Natural killer cell (primary cell): ENCODE measurements at regions of chr12 and their contacts with region 1.

Region 1: DNA sequence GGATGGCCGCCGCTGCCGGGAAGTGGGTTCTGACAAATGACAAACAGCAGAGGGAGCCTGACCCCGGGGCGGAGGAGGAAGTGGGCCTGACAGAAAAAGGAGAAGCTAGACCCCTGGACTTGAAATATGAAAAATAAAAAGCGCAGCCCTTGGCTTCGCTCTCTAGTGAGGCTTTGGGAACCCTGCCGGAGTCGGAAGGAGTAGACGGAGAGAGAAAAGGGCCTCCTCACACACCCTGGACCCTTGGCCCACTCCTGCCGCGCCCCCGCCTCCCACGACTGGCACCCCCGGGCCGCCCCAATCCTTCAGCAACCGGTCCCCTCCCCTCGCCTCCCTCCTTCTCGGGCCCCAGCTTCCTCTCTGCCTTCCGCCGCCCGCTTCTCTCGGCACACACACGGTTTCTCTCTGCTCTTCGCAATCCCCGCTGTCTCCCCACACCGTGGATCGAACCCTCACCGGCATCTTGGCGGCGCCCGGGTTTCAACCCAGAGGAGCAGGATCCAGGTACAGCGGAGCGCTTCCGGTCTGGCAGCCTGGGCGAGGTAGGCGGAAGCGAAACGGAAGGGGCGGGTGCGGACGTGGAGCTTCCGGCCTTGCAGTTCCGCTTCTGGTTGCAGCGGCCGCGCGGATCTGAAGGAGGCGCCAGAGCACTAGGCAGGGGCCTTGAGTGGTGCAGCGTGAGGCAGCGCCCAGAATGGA is at the start of gene ARPC3:
- DNase-seq: peak; percentile 92 to 98
- ATAC-seq: peak; percentile 95 to 98 (median 96)
- H3K4me3 ChIP-seq: peak within 1 kb of the TSS; percentile 97
- H3K4me3 Mint-ChIP-seq: peak within 1 kb of the TSS; percentile 100
- H3K27ac ChIP-seq: peak within 1 kb of the TSS; percentile 97
- H3K27ac Mint-ChIP-seq: peak within 1 kb of the TSS; percentile 99
- H3K4me1 ChIP-seq: peaks cover 29% of the 10 kb centered on the region
- H3K4me1 Mint-ChIP-seq: peaks cover 38 to 39% of the 10 kb centered on the region in 2 donors
- H3K27me3 ChIP-seq: no peaks in the 10 kb centered on the region
- H3K27me3 Mint-ChIP-seq: no peaks in the 10 kb centered on the region
- CTCF ChIP-seq: peak; percentile 77
- total RNA-seq, gene ARPC3: 298 to 344 (median 311) TPM

Region 2: DNA sequence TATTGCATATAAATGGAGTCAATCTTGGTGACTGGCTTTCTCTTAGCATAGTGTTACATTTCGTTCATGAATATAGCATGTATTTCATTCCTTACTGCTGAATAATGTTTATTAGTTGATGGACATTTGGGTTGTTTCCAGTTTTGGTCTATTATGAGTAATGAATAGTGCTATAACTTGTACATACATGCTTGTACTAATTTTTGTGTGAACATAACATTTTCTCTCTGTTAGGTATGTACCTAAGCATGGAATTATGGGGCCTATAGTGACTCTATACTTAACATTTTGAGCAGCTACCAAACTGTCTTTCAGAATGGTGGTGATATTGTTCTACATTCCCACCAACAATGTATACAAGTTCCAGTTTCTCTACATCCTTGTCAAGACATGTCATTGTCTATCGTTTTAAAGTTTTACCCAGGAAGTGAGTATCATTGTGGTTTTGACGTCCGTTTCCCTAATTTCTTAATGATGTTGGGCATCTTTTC is 145.8 kb before region 1 on chr12:
- intact Hi-C with region 1: no loop called
- DNase-seq: no peak
- ATAC-seq: no peak
- H3K4me3 ChIP-seq: no peak overlapping the region
- H3K4me3 Mint-ChIP-seq: no peak overlapping the region
- H3K27ac ChIP-seq: no peak overlapping the region
- H3K27ac Mint-ChIP-seq: peak overlapping the region; percentile 34 to 78
- H3K4me1 ChIP-seq: peaks cover 4% of the 10 kb centered on the region
- H3K4me1 Mint-ChIP-seq: peaks cover 61 to 62% of the 10 kb centered on the region in 2 donors
- H3K27me3 ChIP-seq: no peaks in the 10 kb centered on the region
- H3K27me3 Mint-ChIP-seq: no peaks in the 10 kb centered on the region
- CTCF ChIP-seq: no peak

Region 3: GRCh38 chr12:110468212-110469048 is 18.5 kb after region 1 on chr12 and contains the starts of genes FAM216A and GPN3:
- intact Hi-C with region 1: loop called (anchors 1 kb)
- DNase-seq: peak; percentile 91 to 97
- ATAC-seq: peak; percentile 87 to 94 (median 89)
- H3K4me3 ChIP-seq: peak within 1 kb of the TSS; percentile 92
- H3K4me3 Mint-ChIP-seq: peak within 1 kb of the TSS; percentile 98
- H3K27ac ChIP-seq: peak within 1 kb of the TSS; percentile 81
- H3K27ac Mint-ChIP-seq: peak within 1 kb of the TSS; percentile 89 to 90
- H3K4me1 ChIP-seq: peaks cover 21% of the 10 kb centered on the region
- H3K4me1 Mint-ChIP-seq: peaks cover 23 to 29% of the 10 kb centered on the region in 2 donors
- H3K27me3 ChIP-seq: no peaks in the 10 kb centered on the region
- H3K27me3 Mint-ChIP-seq: no peaks in the 10 kb centered on the region
- CTCF ChIP-seq: no peak
- total RNA-seq, gene FAM216A: 3.1 to 4.7 (median 3.8) TPM
- total RNA-seq, gene GPN3: 4.7 to 10.4 (median 6.1) TPM

Region 4: DNA sequence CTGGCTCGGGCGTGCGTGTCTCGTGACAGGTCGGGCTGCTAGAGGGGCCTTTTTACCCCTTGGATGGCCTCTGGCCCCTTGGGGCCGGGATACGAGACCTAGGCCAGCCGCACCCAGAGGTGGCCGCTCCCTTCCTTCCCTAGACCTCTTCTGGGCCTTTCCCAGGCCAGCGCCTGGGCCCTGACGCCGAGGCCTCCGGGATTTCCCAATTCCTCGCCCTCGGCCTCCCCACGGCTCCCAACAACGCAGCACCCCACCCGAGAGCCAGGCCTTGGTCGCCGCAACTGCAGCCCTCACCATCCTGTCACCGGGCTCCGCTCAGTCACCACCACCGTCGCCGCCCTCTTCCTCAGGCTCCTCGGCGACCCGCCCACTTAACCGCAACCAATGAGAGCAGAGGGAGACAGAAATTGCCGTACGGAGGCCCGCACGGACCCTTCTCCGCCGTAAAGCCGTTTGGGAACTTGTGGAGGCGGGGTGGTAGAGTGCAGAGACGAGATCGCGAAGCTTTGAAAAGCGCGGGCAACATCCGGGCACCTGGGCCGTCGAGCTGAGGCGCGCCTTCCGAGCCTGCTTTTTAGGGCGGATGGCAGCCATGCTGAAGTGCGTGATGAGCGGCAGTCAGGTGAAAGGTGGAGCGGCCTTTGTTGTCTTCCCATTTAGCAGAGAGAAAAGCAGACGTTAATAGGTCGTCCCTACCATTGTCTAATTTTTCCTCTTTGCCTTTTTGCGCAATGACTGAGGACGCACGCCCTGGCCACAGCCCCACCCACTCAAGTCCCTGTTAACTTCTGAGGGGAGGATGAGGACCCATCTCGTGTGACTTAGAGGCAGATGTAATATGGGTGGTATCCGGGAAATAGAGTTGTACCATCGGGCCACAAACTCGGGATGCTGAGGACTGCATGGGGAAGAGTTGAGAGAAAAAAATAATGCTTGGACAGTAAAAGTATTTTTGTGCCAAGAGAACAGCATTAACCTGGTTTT is 52.1 kb after region 1 on chr12 and contains the starts of genes RAD9B and VPS29:
- intact Hi-C with region 1: loop called (anchors 1 kb)
- DNase-seq: peak; percentile 99 to 100
- ATAC-seq: peak; percentile 93 to 98 (median 94)
- H3K4me3 ChIP-seq: peak within 1 kb of the TSS; percentile 97
- H3K4me3 Mint-ChIP-seq: peak within 1 kb of the TSS; percentile 99
- H3K27ac ChIP-seq: peak within 1 kb of the TSS; percentile 91
- H3K27ac Mint-ChIP-seq: peak within 1 kb of the TSS; percentile 98 to 100
- H3K4me1 ChIP-seq: peaks cover 20% of the 10 kb centered on the region
- H3K4me1 Mint-ChIP-seq: peaks cover 29 to 33% of the 10 kb centered on the region in 2 donors
- H3K27me3 ChIP-seq: no peaks in the 10 kb centered on the region
- H3K27me3 Mint-ChIP-seq: no peaks in the 10 kb centered on the region
- CTCF ChIP-seq: no peak
- total RNA-seq, gene RAD9B: 0.18 to 1.8 (median 0.91) TPM
- total RNA-seq, gene VPS29: 94.3 to 115 (median 99.6) TPM

Region 5: GRCh38 chr12:110600254-110600653 is 150.3 kb after region 1 on chr12:
- intact Hi-C with region 1: loop called (anchors 1 kb)
- DNase-seq: peak in 1 of 2 donors; percentile 74
- ATAC-seq: peak in 2 of 3 donors; percentile 44 to 45
- H3K4me3 ChIP-seq: no peak overlapping the region
- H3K4me3 Mint-ChIP-seq: no peak overlapping the region
- H3K27ac ChIP-seq: no peak overlapping the region
- H3K27ac Mint-ChIP-seq: peak overlapping the region in 1 of 2 donors; percentile 51
- H3K4me1 ChIP-seq: peaks cover 11% of the 10 kb centered on the region
- H3K4me1 Mint-ChIP-seq: peaks cover 5 to 6% of the 10 kb centered on the region in 2 donors
- H3K27me3 ChIP-seq: no peaks in the 10 kb centered on the region
- H3K27me3 Mint-ChIP-seq: no peaks in the 10 kb centered on the region
- CTCF ChIP-seq: peak; percentile 55

Region 6: DNA sequence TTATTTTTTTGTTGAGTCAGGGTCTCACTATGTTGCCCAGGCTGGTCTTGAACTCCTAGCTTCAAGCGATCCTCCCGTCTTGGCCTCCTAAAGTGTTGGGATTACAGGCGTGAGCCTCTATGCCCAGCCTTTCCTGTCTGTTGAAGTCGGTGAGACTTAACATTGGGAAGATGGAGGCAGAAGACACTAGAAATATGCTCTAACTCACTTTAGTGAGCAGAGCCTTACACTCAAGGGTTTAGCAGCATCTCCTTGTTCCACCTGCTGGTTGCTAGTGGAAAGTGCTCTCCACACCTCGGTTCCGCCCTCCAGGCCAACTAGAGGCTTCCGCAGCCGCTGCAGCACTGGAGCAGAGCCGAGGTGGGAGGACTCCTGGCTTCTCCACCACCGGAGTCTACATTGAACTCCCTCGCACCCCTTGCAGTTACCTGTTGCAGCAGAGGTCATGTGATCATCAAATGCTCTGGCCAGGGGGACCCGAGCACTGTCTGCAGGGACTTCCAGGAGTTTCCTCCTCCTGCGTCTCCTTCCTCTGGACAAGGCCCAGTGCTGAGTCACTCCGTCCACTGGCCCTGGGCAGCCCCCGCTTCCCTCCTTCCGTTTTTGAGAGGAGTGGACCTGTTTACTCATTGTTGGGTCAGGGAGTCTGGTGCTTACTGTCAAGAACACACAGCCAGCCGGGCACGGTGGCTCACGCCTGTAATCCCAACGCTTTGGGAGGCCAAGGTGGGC is 248.4 kb after region 1 on chr12:
- intact Hi-C with region 1: loop called (anchors 1 kb)
- DNase-seq: peak; percentile 61 to 90
- ATAC-seq: peak; percentile 93 to 100 (median 99)
- H3K4me3 ChIP-seq: no peak overlapping the region
- H3K4me3 Mint-ChIP-seq: no peak overlapping the region
- H3K27ac ChIP-seq: no peak overlapping the region
- H3K27ac Mint-ChIP-seq: peak overlapping the region; percentile 34 to 65
- H3K4me1 ChIP-seq: peaks cover 28% of the 10 kb centered on the region
- H3K4me1 Mint-ChIP-seq: peaks cover 6 to 16% of the 10 kb centered on the region in 2 donors
- H3K27me3 ChIP-seq: no peaks in the 10 kb centered on the region
- H3K27me3 Mint-ChIP-seq: no peaks in the 10 kb centered on the region
- CTCF ChIP-seq: peak; percentile 86

Region 7: GRCh38 chr12:110826592-110827200 is 376.7 kb after region 1 on chr12:
- intact Hi-C with region 1: loop called (anchors 1 kb)
- DNase-seq: peak; percentile 66 to 88
- ATAC-seq: peak; percentile 79 to 91 (median 86)
- H3K4me3 ChIP-seq: no peak overlapping the region
- H3K4me3 Mint-ChIP-seq: no peak overlapping the region
- H3K27ac ChIP-seq: no peak overlapping the region
- H3K27ac Mint-ChIP-seq: no peak overlapping the region
- H3K4me1 ChIP-seq: peaks cover 6% of the 10 kb centered on the region
- H3K4me1 Mint-ChIP-seq: no peaks in the 10 kb centered on the region
- H3K27me3 ChIP-seq: no peaks in the 10 kb centered on the region
- H3K27me3 Mint-ChIP-seq: peaks cover 0 to 7% of the 10 kb centered on the region in 2 donors
- CTCF ChIP-seq: peak; percentile 69

Region 8: DNA sequence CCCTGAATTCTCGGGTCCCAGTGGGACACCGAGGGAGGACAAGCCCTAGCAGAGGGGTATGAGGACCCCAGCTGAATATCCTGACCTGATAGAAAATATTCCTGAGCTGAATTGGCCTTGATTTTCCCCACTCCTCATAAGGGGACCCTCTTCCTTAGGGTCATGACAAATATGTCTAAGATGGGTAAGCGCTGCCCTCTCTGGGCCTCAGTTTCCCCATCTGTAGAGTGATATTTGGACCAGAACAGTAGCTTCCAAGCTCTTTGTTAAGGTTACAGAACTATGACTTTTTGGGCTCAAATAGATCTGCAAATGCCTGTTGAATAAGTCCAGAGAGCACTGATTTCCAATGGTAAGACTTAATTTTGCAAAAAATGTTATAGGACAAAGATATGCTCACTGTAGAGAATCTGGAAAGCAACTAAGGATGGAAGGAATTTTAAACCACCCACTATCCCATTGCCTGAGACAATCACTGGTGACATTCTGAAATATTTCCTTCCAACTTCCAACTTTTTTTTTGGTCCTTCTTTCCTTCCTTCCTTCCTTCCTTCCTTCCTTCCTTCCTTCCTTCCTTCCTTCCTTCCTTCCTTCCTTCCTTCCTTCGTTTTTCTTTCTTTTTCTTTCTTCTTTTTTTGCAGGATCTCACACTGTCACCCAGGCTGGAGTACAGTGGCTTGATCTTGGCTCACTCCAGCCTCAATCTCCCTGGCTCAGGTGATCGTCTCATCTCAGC is 438.5 kb after region 1 on chr12:
- intact Hi-C with region 1: loop called (anchors 1 kb)
- DNase-seq: no peak
- ATAC-seq: no peak
- H3K4me3 ChIP-seq: peak overlapping the region; percentile 59
- H3K4me3 Mint-ChIP-seq: peak overlapping the region; percentile 89
- H3K27ac ChIP-seq: no peak overlapping the region
- H3K27ac Mint-ChIP-seq: peak overlapping the region in 1 of 2 donors; percentile 91
- H3K4me1 ChIP-seq: peaks cover 11% of the 10 kb centered on the region
- H3K4me1 Mint-ChIP-seq: peaks cover 6 to 7% of the 10 kb centered on the region in 2 donors
- H3K27me3 ChIP-seq: no peaks in the 10 kb centered on the region
- H3K27me3 Mint-ChIP-seq: peaks cover 0 to 3% of the 10 kb centered on the region in 2 donors
- CTCF ChIP-seq: peak; percentile 59